Dendritic cell treated with granulocyte-macrophage colony-stimulating factor and Interleukin-4, amounts not matched to agents 40 ng/mL and 50 ng/mL, for 4 days (primary cell): ENCODE measurements at regions of chr4 and their contacts with region 1.

Region 1: DNA sequence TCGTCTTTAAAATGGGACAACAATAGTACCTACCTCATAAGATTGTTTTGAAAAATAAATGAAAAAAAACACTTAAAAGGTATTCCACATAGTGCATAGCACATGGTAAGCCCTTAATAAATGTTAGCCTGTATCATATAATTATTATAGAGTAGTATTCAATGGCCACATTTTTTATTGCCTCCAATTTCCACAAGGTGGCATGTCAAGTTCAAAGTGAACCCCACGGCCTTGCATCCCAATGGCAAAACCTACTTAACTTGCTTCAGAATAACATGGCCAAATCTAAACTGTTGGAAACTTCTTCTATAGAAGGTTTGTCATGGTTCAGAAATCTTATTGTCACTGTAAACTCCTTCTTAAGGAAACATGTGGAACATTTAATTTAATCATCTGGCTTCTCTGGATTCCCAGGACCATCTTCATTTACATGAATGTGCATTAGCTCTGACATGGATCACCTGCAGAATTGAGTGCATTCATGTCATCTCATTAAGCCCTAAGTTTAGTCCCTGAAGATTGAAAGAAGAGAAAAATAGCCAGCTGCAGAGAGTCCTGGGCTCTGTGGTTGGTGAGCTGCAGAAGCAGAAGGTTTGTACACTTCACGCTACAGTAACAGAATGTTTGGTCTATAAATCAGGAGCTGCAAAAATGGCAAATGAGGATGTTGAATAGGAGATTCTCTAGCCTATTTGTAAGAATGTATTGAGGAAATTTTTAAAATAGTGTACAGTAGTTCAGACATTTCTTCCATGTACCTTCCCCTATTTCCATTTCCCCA is 61.0 kb downstream of the ANXA3 start:
- H3K4me3 Mint-ChIP-seq: no peak overlapping the region
- H3K27ac Mint-ChIP-seq: no peak overlapping the region
- H3K4me1 Mint-ChIP-seq: peaks cover 34% of the 10 kb centered on the region
- H3K27me3 Mint-ChIP-seq: no peaks in the 10 kb centered on the region

Region 2: DNA sequence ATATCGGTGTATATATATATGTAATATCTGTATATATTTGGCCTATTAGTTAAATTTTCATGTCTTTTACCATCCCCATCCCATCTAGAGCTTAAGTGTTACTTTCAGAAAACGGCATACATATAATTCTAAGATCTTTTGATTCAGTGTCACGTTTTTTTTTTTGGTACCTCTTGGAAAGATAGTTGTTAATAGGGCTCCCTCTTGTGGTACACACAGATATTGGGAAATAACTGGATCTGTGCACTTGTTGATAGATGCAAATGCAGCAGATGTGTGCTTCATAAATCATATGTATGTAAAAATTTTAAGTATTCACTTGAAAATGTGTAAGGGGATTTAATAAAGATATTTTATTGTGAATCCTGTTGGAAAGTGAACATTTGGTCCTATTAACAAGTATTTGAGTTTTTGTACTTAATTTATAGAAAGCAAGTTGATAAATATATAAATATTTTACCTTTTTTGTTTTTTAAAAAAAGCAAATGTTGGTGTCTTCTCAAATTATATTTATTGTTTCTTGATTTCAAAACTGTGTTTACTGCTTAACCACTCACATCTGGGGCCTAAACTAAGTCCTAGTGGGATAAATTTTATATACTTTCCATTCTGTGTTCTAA is 251.9 kb after region 1 on chr4:
- intact Hi-C with region 1: loop called (anchors 2 kb)
- H3K4me3 Mint-ChIP-seq: no peak overlapping the region
- H3K27ac Mint-ChIP-seq: no peak overlapping the region
- H3K4me1 Mint-ChIP-seq: no peaks in the 10 kb centered on the region
- H3K27me3 Mint-ChIP-seq: no peaks in the 10 kb centered on the region